Caco-2 (cell line): ENCODE measurements at regions of chr2 and their contacts with region 1.

Region 1: GRCh38 chr2:73736855-73737779 is at the start of gene TPRKB:
- DNase-seq: peak; percentile 97 to 98
- H3K4me3 ChIP-seq: peak within 1 kb of the TSS; percentile 76
- H3K4me3 Mint-ChIP-seq: peak within 1 kb of the TSS; percentile 94
- H3K27ac Mint-ChIP-seq: peak within 1 kb of the TSS; percentile 88
- H3K4me1 ChIP-seq: peaks cover 11% of the 10 kb centered on the region; the same call in 1 of the 2 replicates
- H3K4me1 Mint-ChIP-seq: peaks cover 7% of the 10 kb centered on the region
- H3K27me3 ChIP-seq: no peaks in the 10 kb centered on the region
- H3K27me3 Mint-ChIP-seq: no peaks in the 10 kb centered on the region
- CTCF ChIP-seq: no peak
- total RNA-seq, gene TPRKB: 42.1 and 48.8 TPM in 2 replicates

Region 2: GRCh38 chr2:73700131-73700611 is 36.9 kb before region 1 on chr2:
- CTCF ChIA-PET with region 1: no interaction called
- POLR2A ChIA-PET with region 1: no interaction called
- intact Hi-C with region 1: loop called (anchors 5 kb)
- DNase-seq: no peak
- H3K4me3 ChIP-seq: no peak overlapping the region
- H3K4me3 Mint-ChIP-seq: no peak overlapping the region
- H3K27ac Mint-ChIP-seq: no peak overlapping the region
- H3K4me1 ChIP-seq: peaks cover 3% of the 10 kb centered on the region; the same call in 1 of the 2 replicates
- H3K4me1 Mint-ChIP-seq: no peaks in the 10 kb centered on the region
- H3K27me3 ChIP-seq: no peaks in the 10 kb centered on the region
- H3K27me3 Mint-ChIP-seq: peaks cover 4% of the 10 kb centered on the region
- CTCF ChIP-seq: no peak

Region 3: GRCh38 chr2:73779467-73780236 is 42.5 kb after region 1 on chr2 and contains the start of gene DUSP11:
- CTCF ChIA-PET with region 1: interaction called, 3 read pairs
- POLR2A ChIA-PET with region 1: no interaction called
- intact Hi-C with region 1: loop called (anchors 1 kb)
- DNase-seq: peak; percentile 95
- H3K4me3 ChIP-seq: peak within 1 kb of the TSS; percentile 94
- H3K4me3 Mint-ChIP-seq: peak within 1 kb of the TSS; percentile 93
- H3K27ac Mint-ChIP-seq: peak within 1 kb of the TSS; percentile 89
- H3K4me1 ChIP-seq: peaks cover 5% of the 10 kb centered on the region; the same call in 1 of the 2 replicates
- H3K4me1 Mint-ChIP-seq: peaks cover 6% of the 10 kb centered on the region
- H3K27me3 ChIP-seq: no peaks in the 10 kb centered on the region
- H3K27me3 Mint-ChIP-seq: no peaks in the 10 kb centered on the region
- CTCF ChIP-seq: peak; percentile 88 to 95
- total RNA-seq, gene DUSP11: 23.8 and 24.3 TPM in 2 replicates

Region 4: DNA sequence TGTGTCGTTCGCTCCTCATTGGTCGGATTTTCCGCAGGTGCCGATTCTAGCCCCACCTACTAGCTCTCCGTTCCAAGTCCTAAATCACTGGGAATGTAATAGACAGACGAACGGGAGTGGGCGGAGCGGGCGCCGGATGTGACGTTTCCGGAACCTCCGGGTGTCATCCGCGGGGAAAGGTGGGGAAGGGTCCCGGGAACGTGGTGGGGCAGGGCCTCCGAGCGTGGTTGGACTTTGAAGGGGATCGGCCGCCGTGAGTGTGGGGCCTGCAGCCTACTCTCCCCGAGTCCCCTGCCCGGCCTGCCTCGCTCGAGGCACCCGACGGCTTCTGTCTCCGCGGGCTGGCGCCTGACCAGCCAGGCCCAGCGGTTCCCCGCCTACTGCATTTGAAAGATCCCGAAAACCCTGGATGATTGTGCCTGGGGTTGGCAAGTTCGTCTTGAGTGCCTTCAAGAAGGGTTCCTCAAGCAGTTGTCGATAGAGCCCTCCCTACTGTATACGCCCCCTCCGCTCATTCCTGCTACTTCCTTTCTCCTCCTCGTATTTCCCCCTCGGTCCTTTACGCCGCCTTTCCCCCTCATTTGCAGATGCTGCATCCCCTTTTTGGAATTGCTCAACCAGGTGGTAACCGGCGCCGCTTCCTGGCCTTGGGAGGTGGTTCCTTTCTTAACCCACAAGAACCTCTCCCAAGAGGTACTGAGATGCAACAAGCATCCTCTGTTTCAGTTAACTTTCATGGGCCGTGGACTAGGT is 91.9 kb after region 1 on chr2 and contains the start of gene STAMBP:
- CTCF ChIA-PET with region 1: interaction called, 5 read pairs
- POLR2A ChIA-PET with region 1: interaction called, 20 read pairs
- intact Hi-C with region 1: no loop called
- DNase-seq: peak; percentile 96
- H3K4me3 ChIP-seq: peak within 1 kb of the TSS; percentile 75
- H3K4me3 Mint-ChIP-seq: peak within 1 kb of the TSS; percentile 84
- H3K27ac Mint-ChIP-seq: peak within 1 kb of the TSS; percentile 93
- H3K4me1 ChIP-seq: peaks cover 3% of the 10 kb centered on the region; the same call in 1 of the 2 replicates
- H3K4me1 Mint-ChIP-seq: peaks cover 9% of the 10 kb centered on the region
- H3K27me3 ChIP-seq: no peaks in the 10 kb centered on the region
- H3K27me3 Mint-ChIP-seq: no peaks in the 10 kb centered on the region
- CTCF ChIP-seq: no peak
- total RNA-seq, gene STAMBP: 49.8 and 50.1 TPM in 2 replicates

Region 5: DNA sequence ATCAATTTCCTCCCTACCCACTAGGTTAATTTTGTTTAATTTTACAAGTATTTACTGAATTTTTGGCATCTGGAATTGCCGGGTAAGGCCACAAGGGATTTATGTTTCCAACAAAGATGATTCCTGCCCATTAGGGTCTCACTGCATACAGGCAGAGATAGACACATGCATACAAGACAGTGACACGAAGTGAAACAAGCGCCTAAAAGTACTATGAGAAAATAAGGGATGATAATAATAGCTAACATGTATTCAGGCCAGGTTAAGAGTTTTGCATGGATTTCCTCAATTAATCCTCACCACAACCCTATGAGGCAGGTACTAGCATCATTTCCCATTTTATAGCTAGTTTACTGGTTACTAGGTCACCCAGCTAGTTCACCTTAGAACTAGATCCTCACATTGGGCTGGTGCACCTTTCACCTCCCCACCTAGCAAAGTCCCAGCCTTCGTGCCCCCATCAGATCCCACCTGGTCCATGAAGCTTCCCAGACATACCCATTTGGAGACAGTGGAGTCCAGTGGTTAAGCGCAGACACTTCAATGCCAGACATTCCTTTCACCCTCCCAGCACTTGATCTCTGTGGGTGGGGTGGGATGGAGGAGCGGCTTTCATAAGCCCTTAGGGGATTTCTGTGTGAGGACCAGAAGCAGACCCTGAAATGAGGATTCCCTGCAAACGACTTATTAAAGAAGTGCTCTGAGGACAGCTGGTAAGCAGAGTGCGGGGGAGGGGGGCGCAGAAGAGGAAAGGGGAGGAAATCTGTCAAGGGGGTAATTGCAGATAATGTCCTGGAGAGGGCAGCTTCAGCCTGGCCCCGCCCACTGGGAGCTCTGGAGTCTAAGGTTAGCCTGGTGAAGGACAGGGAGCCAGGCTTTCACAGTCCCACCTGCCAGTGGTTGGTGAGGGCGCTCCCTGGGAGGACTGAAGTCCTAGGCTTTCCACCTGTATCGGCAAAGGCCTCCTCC is 183.7 kb after region 1 on chr2:
- CTCF ChIA-PET with region 1: no interaction called
- POLR2A ChIA-PET with region 1: no interaction called
- intact Hi-C with region 1: no loop called
- DNase-seq: peak; percentile 61 to 65
- H3K4me3 ChIP-seq: no peak overlapping the region
- H3K4me3 Mint-ChIP-seq: no peak overlapping the region
- H3K27ac Mint-ChIP-seq: no peak overlapping the region
- H3K4me1 ChIP-seq: no peaks in the 10 kb centered on the region; the same call in 1 of the 2 replicates
- H3K4me1 Mint-ChIP-seq: no peaks in the 10 kb centered on the region
- H3K27me3 ChIP-seq: no peaks in the 10 kb centered on the region
- H3K27me3 Mint-ChIP-seq: no peaks in the 10 kb centered on the region
- CTCF ChIP-seq: no peak